ENCODE measurements at regions of chr20 and their contacts with region 1.

Region 1: GRCh38 chr20:34834459-34834893 is 9.0 kb upstream of the NCOA6 start:
- DNase-seq: peak in 6 of 9 donors; percentile 7 to 55 (median 42)
- ATAC-seq: peak; percentile 49
- H3K4me3 ChIP-seq: no peak overlapping the region
- H3K4me3 Mint-ChIP-seq: no peak overlapping the region
- H3K27ac ChIP-seq: no peak overlapping the region
- H3K27ac Mint-ChIP-seq: no peak overlapping the region
- H3K4me1 ChIP-seq: no peaks in the 10 kb centered on the region
- H3K4me1 Mint-ChIP-seq: peaks cover 0 to 6% (median 0%) of the 10 kb centered on the region in 7 donors
- H3K27me3 ChIP-seq: no peaks in the 10 kb centered on the region
- H3K27me3 Mint-ChIP-seq: peaks cover 10 to 48% (median 13%) of the 10 kb centered on the region in 5 donors

Region 2: GRCh38 chr20:34955232-34956040 is 121.0 kb after region 1 on chr20 and contains the starts of genes GSS and MYH7B:
- CTCF ChIA-PET with region 1: interaction called, 3 read pairs
- POLR2A ChIA-PET with region 1: no interaction called
- intact Hi-C with region 1: loop called (anchors 1 kb)
- DNase-seq: peak; percentile 90 to 100 (median 94)
- ATAC-seq: peak; percentile 97
- H3K4me3 ChIP-seq: peak within 1 kb of the TSS; percentile 87
- H3K4me3 Mint-ChIP-seq: peak within 1 kb of the TSS; percentile 95 to 100 (median 98)
- H3K27ac ChIP-seq: peak within 1 kb of the TSS; percentile 77
- H3K27ac Mint-ChIP-seq: peak within 1 kb of the TSS; percentile 94 to 98 (median 97)
- H3K4me1 ChIP-seq: peaks cover 5 to 11% of the 10 kb centered on the region in 2 donors
- H3K4me1 Mint-ChIP-seq: peaks cover 11 to 40% (median 34%) of the 10 kb centered on the region in 7 donors
- H3K27me3 ChIP-seq: no peaks in the 10 kb centered on the region
- H3K27me3 Mint-ChIP-seq: no peaks in the 10 kb centered on the region
- total RNA-seq, gene GSS: 25.9 to 54.4 (median 45.8) TPM
- total RNA-seq, gene MYH7B: 0.15 to 1.0 (median 0.44) TPM

Region 3: GRCh38 chr20:35001596-35002362 is 167.3 kb after region 1 on chr20:
- CTCF ChIA-PET with region 1: interaction called, 3 read pairs
- POLR2A ChIA-PET with region 1: no interaction called
- intact Hi-C with region 1: loop called in 1 of 2 experiments (anchors 2 kb)
- DNase-seq: no peak
- ATAC-seq: no peak
- H3K4me3 ChIP-seq: no peak overlapping the region
- H3K4me3 Mint-ChIP-seq: no peak overlapping the region
- H3K27ac ChIP-seq: no peak overlapping the region
- H3K27ac Mint-ChIP-seq: peak overlapping the region in 1 of 9 donors; percentile 69
- H3K4me1 ChIP-seq: no peaks in the 10 kb centered on the region
- H3K4me1 Mint-ChIP-seq: peaks cover 0 to 5% (median 0%) of the 10 kb centered on the region in 7 donors
- H3K27me3 ChIP-seq: no peaks in the 10 kb centered on the region
- H3K27me3 Mint-ChIP-seq: no peaks in the 10 kb centered on the region

Region 4: DNA sequence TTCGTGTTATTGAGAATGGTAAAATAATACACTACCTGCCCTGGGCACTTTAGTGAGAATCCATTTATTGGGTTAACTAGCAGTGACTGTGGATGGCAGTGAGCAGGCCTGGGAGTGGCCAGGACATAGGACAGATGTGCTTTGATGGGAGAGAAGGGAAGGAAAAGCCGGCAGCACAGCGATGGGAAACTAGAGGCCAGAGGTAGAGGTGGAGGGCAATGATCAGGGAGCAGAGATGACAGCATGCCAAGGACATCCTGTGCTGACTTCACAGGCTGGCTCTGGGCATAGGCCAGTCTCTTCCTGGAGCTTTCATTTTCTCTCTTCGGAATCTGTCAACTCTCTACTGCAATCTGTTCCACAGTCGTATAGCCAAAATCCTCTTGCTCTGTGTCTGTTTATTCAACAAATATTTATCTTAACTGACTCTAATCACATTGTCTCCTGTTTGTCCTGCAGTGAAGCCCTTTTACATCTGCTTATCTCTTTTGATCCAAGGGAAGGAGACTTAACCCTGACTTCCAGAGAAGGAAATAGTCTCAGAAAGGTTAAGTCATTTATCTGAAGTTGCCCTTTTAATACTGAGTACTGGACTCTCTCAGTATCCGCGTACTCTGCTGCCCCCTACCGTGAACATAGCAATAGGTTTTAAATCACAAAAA is 373.6 kb after region 1 on chr20:
- CTCF ChIA-PET with region 1: interaction called, 3 read pairs
- POLR2A ChIA-PET with region 1: no interaction called
- intact Hi-C with region 1: loop called (anchors 1 to 2 kb)
- DNase-seq: peak; percentile 46 to 75 (median 64)
- ATAC-seq: peak; percentile 96
- H3K4me3 ChIP-seq: no peak overlapping the region
- H3K4me3 Mint-ChIP-seq: no peak overlapping the region
- H3K27ac ChIP-seq: no peak overlapping the region
- H3K27ac Mint-ChIP-seq: no peak overlapping the region
- H3K4me1 ChIP-seq: no peaks in the 10 kb centered on the region
- H3K4me1 Mint-ChIP-seq: no peaks in the 10 kb centered on the region
- H3K27me3 ChIP-seq: no peaks in the 10 kb centered on the region
- H3K27me3 Mint-ChIP-seq: no peaks in the 10 kb centered on the region

Region 5: DNA sequence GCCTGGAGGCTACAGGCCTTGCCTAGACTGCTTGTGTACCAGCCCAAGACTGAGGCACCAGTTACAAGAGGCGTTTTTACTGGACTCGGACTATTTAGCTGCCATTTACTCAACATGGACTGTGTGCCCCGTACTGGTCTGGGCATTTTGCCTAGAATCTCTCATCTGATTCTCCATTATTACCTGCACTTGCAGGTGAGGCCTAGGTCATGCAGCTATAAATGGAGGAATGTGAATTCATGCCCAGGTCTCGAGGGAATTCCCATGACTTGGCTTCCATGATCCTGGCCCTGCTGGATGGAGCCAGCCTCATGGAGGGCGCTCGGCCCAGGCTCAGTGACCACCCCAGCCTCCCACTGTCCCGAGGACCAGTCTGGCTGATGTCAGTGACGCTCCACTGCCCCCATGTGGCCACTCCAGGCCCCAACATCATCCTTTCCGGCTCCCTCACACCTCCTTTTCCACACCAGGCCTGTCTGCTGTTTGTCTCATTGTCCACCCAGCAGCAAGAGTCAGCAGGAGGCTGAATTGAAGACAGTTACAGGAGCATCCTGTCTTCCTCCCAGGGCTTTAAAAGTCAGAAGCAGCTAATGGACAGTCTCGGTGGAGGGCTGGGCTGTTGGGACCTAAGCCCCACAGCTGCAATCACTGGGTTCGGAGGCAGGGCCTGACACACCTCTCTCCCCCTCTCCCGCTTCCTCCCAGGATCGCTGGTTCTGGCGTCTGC is 434.7 kb after region 1 on chr20:
- CTCF ChIA-PET with region 1: no interaction called
- POLR2A ChIA-PET with region 1: no interaction called
- intact Hi-C with region 1: loop called (anchors 5 to 10 kb)
- DNase-seq: peak in 3 of 9 donors; percentile 37 to 54 (median 39)
- ATAC-seq: peak; percentile 77
- H3K4me3 ChIP-seq: no peak overlapping the region
- H3K4me3 Mint-ChIP-seq: no peak overlapping the region
- H3K27ac ChIP-seq: no peak overlapping the region
- H3K27ac Mint-ChIP-seq: peak overlapping the region in 2 of 9 donors; percentile 38 to 68
- H3K4me1 ChIP-seq: no peaks in the 10 kb centered on the region
- H3K4me1 Mint-ChIP-seq: peaks cover 0 to 21% (median 15%) of the 10 kb centered on the region in 7 donors
- H3K27me3 ChIP-seq: no peaks in the 10 kb centered on the region
- H3K27me3 Mint-ChIP-seq: no peaks in the 10 kb centered on the region

Region 6: GRCh38 chr20:35303735-35304491 is 469.4 kb after region 1 on chr20:
- CTCF ChIA-PET with region 1: interaction called, 3 read pairs
- POLR2A ChIA-PET with region 1: no interaction called
- intact Hi-C with region 1: loop called in 1 of 2 experiments (anchors 1 kb)
- DNase-seq: peak; percentile 57 to 87 (median 81)
- ATAC-seq: peak; percentile 96
- H3K4me3 ChIP-seq: no peak overlapping the region
- H3K4me3 Mint-ChIP-seq: no peak overlapping the region
- H3K27ac ChIP-seq: no peak overlapping the region
- H3K27ac Mint-ChIP-seq: peak overlapping the region in 6 of 9 donors; percentile 8 to 78 (median 60)
- H3K4me1 ChIP-seq: no peaks in the 10 kb centered on the region
- H3K4me1 Mint-ChIP-seq: peaks cover 0 to 40% (median 9%) of the 10 kb centered on the region in 7 donors
- H3K27me3 ChIP-seq: no peaks in the 10 kb centered on the region
- H3K27me3 Mint-ChIP-seq: no peaks in the 10 kb centered on the region

Region 7: GRCh38 chr20:35447082-35447789 is 612.8 kb after region 1 on chr20:
- CTCF ChIA-PET with region 1: no interaction called
- POLR2A ChIA-PET with region 1: no interaction called
- intact Hi-C with region 1: loop called in 1 of 2 experiments (anchors 1 kb)
- DNase-seq: peak; percentile 71 to 94 (median 83)
- ATAC-seq: peak; percentile 100
- H3K4me3 ChIP-seq: peak overlapping the region; percentile 53
- H3K4me3 Mint-ChIP-seq: peak overlapping the region; percentile 73 to 98 (median 90)
- H3K27ac ChIP-seq: no peak overlapping the region
- H3K27ac Mint-ChIP-seq: peak overlapping the region in 2 of 9 donors; percentile 71 to 80
- H3K4me1 ChIP-seq: peaks cover 0 to 3% of the 10 kb centered on the region in 2 donors
- H3K4me1 Mint-ChIP-seq: peaks cover 0 to 8% (median 4%) of the 10 kb centered on the region in 7 donors
- H3K27me3 ChIP-seq: no peaks in the 10 kb centered on the region
- H3K27me3 Mint-ChIP-seq: peaks cover 0 to 7% (median 2%) of the 10 kb centered on the region in 5 donors